GM10248 (cell line): ENCODE measurements at regions of chr6 and their contacts with region 1.

Region 1: GRCh38 chr6:134063966-134064445 is 11.6 kb upstream of the SLC2A12 start:
- DNase-seq: peak; percentile 76
- CTCF ChIP-seq: peak; percentile 94

Region 2: GRCh38 chr6:133916650-133917151 is 147.3 kb before region 1 on chr6:
- CTCF ChIA-PET with region 1: interaction called, 122 read pairs
- POLR2A ChIA-PET with region 1: no interaction called
- DNase-seq: peak; percentile 47
- CTCF ChIP-seq: peak; percentile 94

Region 3: GRCh38 chr6:133952815-133953633 is 111.0 kb before region 1 on chr6 and contains the start of gene TBPL1:
- CTCF ChIA-PET with region 1: interaction called, 14 read pairs
- POLR2A ChIA-PET with region 1: no interaction called
- DNase-seq: peak; percentile 92
- CTCF ChIP-seq: no peak

Region 4: DNA sequence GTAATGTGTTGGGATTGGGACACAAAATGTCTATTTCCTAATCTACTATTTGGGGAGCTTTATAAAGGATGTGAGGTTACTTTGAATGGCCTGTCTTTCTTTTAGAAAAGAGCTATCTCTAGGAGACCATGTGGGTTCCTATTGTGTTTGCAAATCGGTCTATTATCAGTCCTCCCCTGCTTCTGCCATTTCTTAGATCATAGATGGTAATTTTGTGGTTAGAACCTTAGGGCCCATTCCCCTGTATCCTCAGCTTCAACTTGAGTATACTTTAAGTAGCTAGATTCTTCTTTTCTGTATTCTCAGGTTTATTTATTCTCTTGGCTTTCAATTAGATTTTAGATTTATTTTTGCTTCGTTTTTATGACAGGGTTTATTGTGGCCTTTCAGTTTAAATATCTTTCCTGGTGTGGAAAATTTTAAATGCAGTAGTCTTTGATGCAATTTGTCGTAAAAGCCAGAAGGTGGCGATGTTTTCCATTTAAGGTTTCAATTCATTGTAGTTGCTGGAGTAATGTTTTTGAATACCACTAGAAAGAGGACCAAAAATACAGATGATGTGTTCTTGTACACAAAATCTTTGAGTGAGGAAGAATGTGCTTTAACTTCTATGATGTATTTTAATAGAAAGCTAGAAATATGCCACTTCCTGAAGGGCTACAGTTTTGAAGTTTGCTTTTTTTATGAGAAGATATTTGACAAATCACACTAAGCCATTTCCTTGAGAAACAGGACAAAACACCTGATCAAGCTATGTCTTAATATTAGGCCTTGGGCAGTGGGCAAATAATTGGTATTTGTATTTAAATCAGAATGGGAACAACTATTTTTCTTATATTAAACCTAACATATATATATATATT is 90.7 kb before region 1 on chr6:
- CTCF ChIA-PET with region 1: interaction called, 54 read pairs
- POLR2A ChIA-PET with region 1: no interaction called
- DNase-seq: peak; percentile 44
- CTCF ChIP-seq: peak; percentile 63

Region 5: DNA sequence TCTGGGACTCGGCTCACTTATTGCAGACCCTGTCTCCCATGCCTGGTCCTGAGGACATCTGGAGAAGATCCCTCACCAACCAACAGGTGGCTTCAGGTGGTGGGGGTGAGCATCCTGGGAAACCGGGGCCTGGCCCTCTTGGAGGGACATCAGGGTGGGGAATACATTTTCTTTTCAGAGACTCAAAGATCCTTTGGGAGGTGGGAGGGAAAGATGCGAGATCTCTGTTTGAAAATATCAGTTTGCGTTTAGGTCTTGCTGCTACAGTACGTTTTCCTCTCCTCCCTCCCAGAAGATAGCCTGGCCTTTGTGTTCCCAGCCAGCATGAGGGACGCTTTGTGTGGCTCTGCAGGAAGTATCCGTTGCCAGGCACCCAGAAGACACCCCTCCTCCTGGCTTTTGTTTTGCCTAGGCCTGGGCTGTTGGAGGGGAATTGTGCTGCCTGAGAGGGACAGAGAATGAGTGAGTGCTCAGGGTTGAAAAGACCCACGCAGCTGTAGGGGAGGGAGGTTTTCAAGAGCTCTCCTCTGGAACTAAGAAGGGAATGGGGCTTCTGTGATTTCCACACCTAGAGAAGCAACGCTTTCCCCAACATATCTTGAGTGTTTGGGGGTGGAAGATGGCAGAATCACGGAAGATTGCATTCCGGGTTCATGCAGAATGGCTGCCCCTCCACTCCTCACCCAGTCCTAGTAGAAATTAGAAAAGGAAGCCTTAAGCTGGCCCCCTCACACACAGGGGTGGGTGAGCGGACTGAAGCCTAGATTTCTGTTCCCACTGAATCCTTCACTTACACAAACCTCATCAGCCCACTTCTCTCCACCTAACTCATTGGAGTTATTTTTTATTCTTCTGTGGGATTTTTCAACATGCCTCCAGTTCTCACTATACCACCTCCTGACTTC is 10.4 kb after region 1 on chr6:
- CTCF ChIA-PET with region 1: interaction called, 46 read pairs
- POLR2A ChIA-PET with region 1: no interaction called
- DNase-seq: no peak
- CTCF ChIP-seq: no peak

Region 6: GRCh38 chr6:134090591-134090990 is 26.6 kb after region 1 on chr6:
- CTCF ChIA-PET with region 1: interaction called, 30 read pairs
- POLR2A ChIA-PET with region 1: no interaction called
- DNase-seq: no peak
- CTCF ChIP-seq: no peak